ENCODE measurements at regions of chr3 and their contacts with region 1.

Region 1: DNA sequence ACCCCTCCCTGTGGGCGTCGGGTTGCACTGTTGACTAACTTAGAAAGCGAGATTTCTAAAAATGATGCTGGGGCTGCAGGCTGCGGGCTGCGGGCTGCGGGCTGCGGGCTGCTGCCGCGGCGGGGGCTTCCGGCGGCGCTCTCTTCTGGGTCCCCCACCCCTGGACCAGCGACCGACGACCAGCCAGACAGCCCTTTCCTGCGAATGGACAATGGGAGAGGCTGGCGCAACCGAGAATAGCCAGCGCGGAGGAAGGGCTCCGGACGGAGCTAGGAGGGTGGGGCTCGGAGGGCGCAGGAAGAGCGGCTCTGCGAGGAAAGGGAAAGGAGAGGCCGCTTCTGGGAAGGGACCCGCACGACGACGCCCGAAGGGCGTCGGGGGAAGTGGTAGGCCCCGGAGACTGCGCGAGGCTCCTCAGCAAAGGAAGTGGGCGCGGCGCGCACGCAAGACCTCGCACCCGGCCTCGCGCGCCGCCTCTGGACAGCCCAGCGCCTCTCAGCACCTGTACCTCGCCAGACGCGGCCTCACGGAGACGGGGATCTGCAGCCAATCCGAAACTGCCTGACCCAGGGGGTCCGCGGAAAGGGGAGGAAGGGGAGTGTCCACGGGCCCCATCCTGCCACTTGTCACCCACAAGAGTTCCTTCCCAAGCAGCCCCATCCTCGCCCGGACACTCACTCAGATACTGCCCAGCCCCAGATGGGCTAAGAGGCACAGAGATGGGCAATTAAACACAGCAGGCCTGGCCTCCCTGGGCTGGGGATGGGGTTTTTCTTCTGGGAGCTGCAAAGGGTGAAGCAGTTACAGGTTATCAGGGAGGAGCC is 70.7 kb downstream of the SLC12A8 start:
- DNase-seq: peak; percentile 52 to 77 (median 66)
- H3K4me3 ChIP-seq: peak overlapping the region in 1 of 4 donors; percentile 39
- H3K27ac ChIP-seq: peak overlapping the region in 3 of 5 donors; percentile 10 to 91 (median 84)
- H3K4me1 ChIP-seq: peaks cover 10 to 56% of the 10 kb centered on the region in 2 donors
- H3K27me3 ChIP-seq: no peaks in the 10 kb centered on the region
- CTCF ChIP-seq: peak in 5 of 6 experiments; percentile 7 to 39 (median 26)
- POLR2A ChIP-seq: no peak

Region 2: GRCh38 chr3:125003369-125003853 is 138.4 kb before region 1 on chr3:
- intact Hi-C with region 1: loop called (anchors 10 kb)
- DNase-seq: peak; percentile 58 to 91 (median 87)
- H3K4me3 ChIP-seq: no peak overlapping the region
- H3K27ac ChIP-seq: peak overlapping the region in 3 of 5 donors; percentile 19 to 54 (median 33)
- H3K4me1 ChIP-seq: peaks cover 6 to 26% of the 10 kb centered on the region in 2 donors
- H3K27me3 ChIP-seq: no peaks in the 10 kb centered on the region
- CTCF ChIP-seq: no peak
- POLR2A ChIP-seq: peak in 1 of 2 donors; percentile 44

Region 3: GRCh38 chr3:125662675-125663074 is 520.9 kb after region 1 on chr3:
- intact Hi-C with region 1: no loop called
- DNase-seq: no peak
- H3K4me3 ChIP-seq: no peak overlapping the region
- H3K27ac ChIP-seq: no peak overlapping the region
- H3K4me1 ChIP-seq: no peaks in the 10 kb centered on the region
- H3K27me3 ChIP-seq: no peaks in the 10 kb centered on the region
- CTCF ChIP-seq: no peak
- POLR2A ChIP-seq: no peak